CD14-positive monocyte (primary cell): ENCODE measurements at regions of chr10 and their contacts with region 1.

Region 1: GRCh38 chr10:7184660-7185366 is 226.0 kb downstream of the SFMBT2 start:
- DNase-seq: peak; percentile 95 to 98 (median 98)
- H3K4me3 ChIP-seq: peak overlapping the region; percentile 25 to 67 (median 56)
- H3K4me3 Mint-ChIP-seq: peak overlapping the region; percentile 55 to 86
- H3K27ac ChIP-seq: peak overlapping the region; percentile 92 to 100
- H3K27ac Mint-ChIP-seq: peak overlapping the region; percentile 98 to 100 (median 99)
- H3K4me1 ChIP-seq: peaks cover 86 to 89% of the 10 kb centered on the region in 2 donors
- H3K4me1 Mint-ChIP-seq: peaks cover 76% of the 10 kb centered on the region
- H3K27me3 ChIP-seq: no peaks in the 10 kb centered on the region
- H3K27me3 Mint-ChIP-seq: no peaks in the 10 kb centered on the region
- CTCF ChIP-seq: no peak

Region 2: GRCh38 chr10:6275022-6275997 is 909.5 kb before region 1 on chr10:
- intact Hi-C with region 1: loop called in 1 of 2 experiments (anchors 10 kb)
- DNase-seq: peak; percentile 100
- H3K4me3 ChIP-seq: peak overlapping the region in 2 of 3 experiments; percentile 15 to 24
- H3K4me3 Mint-ChIP-seq: peak overlapping the region; percentile 67 to 83
- H3K27ac ChIP-seq: peak overlapping the region; percentile 96 to 98
- H3K27ac Mint-ChIP-seq: peak overlapping the region; percentile 97 to 100 (median 99)
- H3K4me1 ChIP-seq: peaks cover 27 to 33% of the 10 kb centered on the region in 2 donors
- H3K4me1 Mint-ChIP-seq: peaks cover 49% of the 10 kb centered on the region
- H3K27me3 ChIP-seq: no peaks in the 10 kb centered on the region
- H3K27me3 Mint-ChIP-seq: peaks cover 1 to 17% (median 4%) of the 10 kb centered on the region in 3 donors
- CTCF ChIP-seq: no peak

Region 3: DNA sequence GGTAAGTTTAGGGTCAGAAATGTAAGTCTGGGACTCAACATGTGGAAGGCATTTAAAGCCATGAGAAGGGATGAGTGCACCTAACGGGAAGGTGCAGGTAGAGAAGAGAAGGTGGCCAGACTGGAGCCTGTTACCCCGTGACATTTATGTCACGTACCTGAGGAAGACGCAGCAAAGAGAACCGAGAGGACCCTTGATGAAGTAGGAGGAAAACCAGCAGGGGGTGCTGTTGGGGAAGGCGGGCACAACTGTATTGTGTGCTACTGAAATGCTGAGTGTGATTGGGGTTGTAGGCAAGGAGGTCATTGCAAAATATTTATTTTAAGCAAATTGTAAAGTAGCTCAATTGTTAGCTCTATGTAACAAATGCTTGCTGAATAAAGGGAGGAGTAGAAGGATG is 266.5 kb before region 1 on chr10:
- intact Hi-C with region 1: loop called in 1 of 2 experiments (anchors 5 kb)
- DNase-seq: peak; percentile 23 to 41 (median 35)
- H3K4me3 ChIP-seq: no peak overlapping the region
- H3K4me3 Mint-ChIP-seq: no peak overlapping the region
- H3K27ac ChIP-seq: no peak overlapping the region
- H3K27ac Mint-ChIP-seq: peak overlapping the region in 2 of 7 donors; percentile 15 to 27
- H3K4me1 ChIP-seq: peaks cover 23 to 25% of the 10 kb centered on the region in 2 donors
- H3K4me1 Mint-ChIP-seq: peaks cover 36% of the 10 kb centered on the region
- H3K27me3 ChIP-seq: no peaks in the 10 kb centered on the region
- H3K27me3 Mint-ChIP-seq: peaks cover 0 to 2% (median 0%) of the 10 kb centered on the region in 3 donors
- CTCF ChIP-seq: peak; percentile 68

Region 4: DNA sequence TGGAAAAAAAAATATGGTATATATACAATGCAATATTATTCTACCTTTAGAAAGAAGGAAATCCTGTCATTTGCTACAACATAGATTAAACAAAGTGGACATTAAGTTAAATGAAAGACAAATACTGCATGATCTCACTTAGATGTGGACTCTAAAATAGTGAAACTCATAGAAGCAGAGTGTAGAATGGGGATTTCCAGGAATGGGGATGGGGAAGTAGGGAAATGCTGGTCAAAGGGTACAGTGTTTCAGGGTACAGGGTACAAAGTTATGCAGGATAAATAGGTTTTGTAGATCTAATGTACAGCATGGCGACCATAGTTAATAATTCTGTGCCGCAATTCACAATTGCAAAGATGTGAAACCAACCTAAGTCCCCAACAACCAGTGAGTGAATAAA is 159.5 kb before region 1 on chr10:
- intact Hi-C with region 1: no loop called
- DNase-seq: no peak
- H3K4me3 ChIP-seq: no peak overlapping the region
- H3K4me3 Mint-ChIP-seq: no peak overlapping the region
- H3K27ac ChIP-seq: no peak overlapping the region
- H3K27ac Mint-ChIP-seq: no peak overlapping the region
- H3K4me1 ChIP-seq: peaks cover 15 to 26% of the 10 kb centered on the region in 2 donors
- H3K4me1 Mint-ChIP-seq: peaks cover 31% of the 10 kb centered on the region
- H3K27me3 ChIP-seq: no peaks in the 10 kb centered on the region
- H3K27me3 Mint-ChIP-seq: peaks cover 0 to 2% (median 0%) of the 10 kb centered on the region in 3 donors
- CTCF ChIP-seq: no peak

Region 5: GRCh38 chr10:7045891-7046599 is 138.8 kb before region 1 on chr10:
- intact Hi-C with region 1: no loop called
- DNase-seq: peak; percentile 65 to 75 (median 69)
- H3K4me3 ChIP-seq: peak overlapping the region in 1 of 3 experiments; percentile 34
- H3K4me3 Mint-ChIP-seq: peak overlapping the region in 1 of 2 donors; percentile 13
- H3K27ac ChIP-seq: peak overlapping the region in 1 of 2 donors; percentile 38
- H3K27ac Mint-ChIP-seq: peak overlapping the region in 6 of 7 donors; percentile 23 to 90 (median 62)
- H3K4me1 ChIP-seq: peaks cover 38 to 47% of the 10 kb centered on the region in 2 donors
- H3K4me1 Mint-ChIP-seq: peaks cover 45% of the 10 kb centered on the region
- H3K27me3 ChIP-seq: no peaks in the 10 kb centered on the region
- H3K27me3 Mint-ChIP-seq: peaks cover 0 to 6% (median 1%) of the 10 kb centered on the region in 3 donors
- CTCF ChIP-seq: no peak

Region 6: GRCh38 chr10:7121154-7121810 is 63.5 kb before region 1 on chr10:
- intact Hi-C with region 1: loop called in 1 of 2 experiments (anchors 5 kb)
- DNase-seq: peak; percentile 55 to 71 (median 66)
- H3K4me3 ChIP-seq: no peak overlapping the region
- H3K4me3 Mint-ChIP-seq: no peak overlapping the region
- H3K27ac ChIP-seq: no peak overlapping the region
- H3K27ac Mint-ChIP-seq: no peak overlapping the region
- H3K4me1 ChIP-seq: peaks cover 5 to 6% of the 10 kb centered on the region in 2 donors
- H3K4me1 Mint-ChIP-seq: peaks cover 17% of the 10 kb centered on the region
- H3K27me3 ChIP-seq: no peaks in the 10 kb centered on the region
- H3K27me3 Mint-ChIP-seq: peaks cover 0 to 2% (median 0%) of the 10 kb centered on the region in 3 donors
- CTCF ChIP-seq: peak; percentile 86

Region 7: GRCh38 chr10:7260412-7260900 is 75.6 kb after region 1 on chr10:
- intact Hi-C with region 1: loop called in 1 of 2 experiments (anchors 5 kb)
- DNase-seq: peak; percentile 66 to 76 (median 75)
- H3K4me3 ChIP-seq: peak overlapping the region in 1 of 3 experiments; percentile 43
- H3K4me3 Mint-ChIP-seq: peak overlapping the region; percentile 56 to 72
- H3K27ac ChIP-seq: peak overlapping the region in 1 of 2 donors; percentile 40
- H3K27ac Mint-ChIP-seq: peak overlapping the region in 4 of 7 donors; percentile 56 to 93 (median 73)
- H3K4me1 ChIP-seq: peaks cover 37 to 47% of the 10 kb centered on the region in 2 donors
- H3K4me1 Mint-ChIP-seq: peaks cover 52% of the 10 kb centered on the region
- H3K27me3 ChIP-seq: no peaks in the 10 kb centered on the region
- H3K27me3 Mint-ChIP-seq: no peaks in the 10 kb centered on the region
- CTCF ChIP-seq: peak; percentile 76